Heart right ventricle (tissue), 16 donors: ENCODE measurements at regions of chr3 and their contacts with region 1.

Region 1: GRCh38 chr3:194134757-194135528 is 1.0 kb upstream of the HES1 start:
- DNase-seq: peak; percentile 93 to 96
- ATAC-seq: peak; percentile 61 to 83 (median 68)
- H3K4me3 ChIP-seq: peak overlapping the region; percentile 39 to 94 (median 69)
- H3K27ac ChIP-seq: peak overlapping the region; percentile 94 to 99 (median 96)
- H3K4me1 ChIP-seq: peaks cover 7 to 80% (median 60%) of the 10 kb centered on the region in 9 donors
- H3K27me3 ChIP-seq: peaks cover 0 to 94% (median 4%) of the 10 kb centered on the region in 7 donors
- CTCF ChIP-seq: peak in 1 of 9 donors; percentile 2

Region 2: DNA sequence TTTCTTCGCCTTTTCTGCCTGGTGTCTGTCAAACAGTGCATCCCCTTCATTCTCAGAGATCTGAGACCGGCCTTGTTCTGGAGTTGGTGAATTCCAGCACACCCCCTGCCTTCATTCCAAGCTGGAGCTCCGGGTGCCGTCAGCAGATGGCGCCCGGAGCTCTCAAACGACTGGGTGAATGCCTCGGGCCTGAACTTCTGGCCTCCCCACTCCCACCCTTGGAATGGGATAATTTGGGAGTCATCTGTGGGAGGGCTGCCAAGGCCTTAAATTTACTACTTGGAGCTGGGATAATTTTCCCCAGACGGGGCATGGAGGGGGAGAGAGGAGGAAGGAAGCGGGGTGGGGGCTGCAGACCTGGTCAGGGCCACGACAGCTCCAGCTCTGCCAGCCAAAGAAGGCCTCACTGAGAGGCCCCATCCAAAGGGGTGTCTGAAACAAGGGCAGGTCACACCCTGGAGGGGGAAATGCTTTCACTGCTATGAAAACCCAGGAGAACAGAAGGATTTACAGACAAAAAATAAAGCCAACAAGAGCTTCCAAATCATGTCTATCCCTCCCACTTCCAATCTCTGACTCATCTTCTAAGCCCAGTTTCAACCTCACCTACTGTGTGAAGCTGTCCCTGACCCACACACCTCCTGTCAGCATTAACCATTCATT is 354.0 kb before region 1 on chr3:
- intact Hi-C with region 1: loop called in 6 of 10 experiments (anchors 2 to 5 kb)
- DNase-seq: peak; percentile 72 to 75
- ATAC-seq: peak; percentile 85 to 95 (median 92)
- H3K4me3 ChIP-seq: no peak overlapping the region
- H3K27ac ChIP-seq: no peak overlapping the region
- H3K4me1 ChIP-seq: peaks cover 3 to 22% (median 8%) of the 10 kb centered on the region in 9 donors
- H3K27me3 ChIP-seq: peaks cover 4 to 81% (median 59%) of the 10 kb centered on the region in 7 donors
- CTCF ChIP-seq: peak; percentile 70 to 93 (median 80)

Region 3: GRCh38 chr3:193863657-193864357 is 271.1 kb before region 1 on chr3:
- intact Hi-C with region 1: loop called in 3 of 10 experiments (anchors 2 to 5 kb)
- DNase-seq: peak; percentile 40 to 45
- ATAC-seq: peak; percentile 46 to 94 (median 76)
- H3K4me3 ChIP-seq: no peak overlapping the region
- H3K27ac ChIP-seq: peak overlapping the region in 8 of 10 donors; percentile 32 to 67 (median 43)
- H3K4me1 ChIP-seq: peaks cover 0 to 41% (median 34%) of the 10 kb centered on the region in 9 donors
- H3K27me3 ChIP-seq: peaks cover 0 to 3% (median under 1%) of the 10 kb centered on the region in 7 donors
- CTCF ChIP-seq: no peak

Region 4: DNA sequence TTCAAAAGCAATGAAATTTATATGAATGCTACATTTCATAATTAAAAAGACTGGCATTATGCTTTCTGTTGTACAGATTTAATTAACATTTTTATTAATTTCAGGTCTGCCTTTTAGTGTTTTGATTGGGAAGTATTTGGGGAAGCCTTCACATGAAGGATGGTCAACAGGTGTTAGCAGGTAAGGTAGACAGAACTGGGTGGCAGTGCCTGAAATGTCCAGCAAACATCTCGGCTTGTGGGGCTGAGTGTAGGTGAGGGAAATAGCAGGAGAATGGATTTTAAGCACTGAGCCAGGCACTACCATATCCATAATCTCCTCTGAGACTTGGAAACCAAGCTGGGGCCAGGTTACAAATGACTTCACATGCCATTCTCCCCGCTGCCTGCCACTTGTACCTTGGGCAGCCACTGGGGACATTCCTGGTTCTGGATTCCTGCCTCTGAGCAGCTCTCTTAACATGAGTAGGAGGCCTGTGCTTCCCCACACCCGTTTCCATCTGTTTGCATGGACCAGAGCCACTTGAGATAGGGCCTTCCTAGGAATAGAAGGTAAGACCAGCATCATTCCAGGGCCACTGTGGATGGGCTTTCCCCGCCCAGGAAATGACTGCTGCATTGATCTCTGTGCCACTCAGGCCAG is 124.9 kb before region 1 on chr3:
- intact Hi-C with region 1: loop called in 2 of 10 experiments (anchors 5 to 10 kb)
- DNase-seq: peak in 1 of 2 donors; percentile 12
- ATAC-seq: peak in 6 of 8 donors; percentile 46 to 73 (median 52)
- H3K4me3 ChIP-seq: no peak overlapping the region
- H3K27ac ChIP-seq: no peak overlapping the region
- H3K4me1 ChIP-seq: peaks cover 0 to 17% (median 5%) of the 10 kb centered on the region in 9 donors
- H3K27me3 ChIP-seq: peaks cover 0 to 82% (median 26%) of the 10 kb centered on the region in 7 donors
- CTCF ChIP-seq: peak in 1 of 9 donors; percentile 6

Region 5: DNA sequence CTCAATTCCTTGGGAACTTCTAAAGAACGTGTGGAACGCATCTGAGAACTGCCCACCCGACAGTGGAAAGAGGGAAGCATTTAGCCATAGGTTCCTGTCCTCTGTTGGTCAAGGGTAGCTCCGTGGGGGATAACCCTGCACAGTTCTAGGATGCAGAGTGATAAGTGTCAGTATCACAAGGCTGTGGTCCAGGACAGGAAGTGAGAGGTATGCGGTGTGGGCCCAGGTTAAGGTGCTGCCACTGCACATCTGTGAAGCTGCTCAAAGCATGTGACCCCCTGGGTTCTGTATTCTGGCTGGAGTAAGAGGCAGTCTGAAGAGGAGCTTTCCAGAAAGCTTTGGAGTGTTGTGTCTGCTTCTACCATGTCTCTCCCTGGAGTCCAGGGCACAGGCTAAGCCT is 50.7 kb before region 1 on chr3:
- intact Hi-C with region 1: loop called in 2 of 10 experiments (anchors 5 to 10 kb)
- DNase-seq: no peak
- ATAC-seq: no peak
- H3K4me3 ChIP-seq: no peak overlapping the region
- H3K27ac ChIP-seq: no peak overlapping the region
- H3K4me1 ChIP-seq: peaks cover 9 to 29% (median 18%) of the 10 kb centered on the region in 9 donors
- H3K27me3 ChIP-seq: peaks cover 0 to 12% (median 0%) of the 10 kb centered on the region in 7 donors
- CTCF ChIP-seq: no peak

Region 6: DNA sequence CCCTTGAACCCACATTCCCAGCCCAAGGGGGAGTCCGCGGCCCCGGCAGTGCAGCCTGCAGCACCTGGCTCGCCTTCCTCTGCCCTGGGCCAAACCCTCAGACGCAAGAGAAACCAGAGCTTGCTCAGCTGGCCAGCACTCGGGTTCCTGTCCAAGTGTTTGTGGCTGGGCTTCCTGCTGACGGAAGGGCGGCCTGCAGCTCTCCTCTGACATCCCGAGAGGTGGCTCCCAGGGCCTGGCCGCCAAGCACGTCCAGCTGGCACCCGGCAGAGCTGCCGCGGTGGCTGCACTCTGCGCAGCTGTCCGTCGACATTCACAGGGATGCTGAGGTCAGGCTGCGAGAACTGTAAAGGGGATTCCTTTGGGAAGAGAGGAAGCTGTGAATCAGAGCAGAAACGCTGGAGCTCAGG is 130.5 kb after region 1 on chr3:
- intact Hi-C with region 1: loop called in 8 of 10 experiments (anchors 2 to 5 kb)
- DNase-seq: peak; percentile 92 to 94
- ATAC-seq: peak; percentile 78 to 88 (median 80)
- H3K4me3 ChIP-seq: peak overlapping the region in 2 of 10 donors; percentile 12 to 20
- H3K27ac ChIP-seq: peak overlapping the region in 9 of 10 donors; percentile 70 to 93 (median 85)
- H3K4me1 ChIP-seq: peaks cover 32 to 68% (median 60%) of the 10 kb centered on the region in 9 donors
- H3K27me3 ChIP-seq: no peaks in the 10 kb centered on the region
- CTCF ChIP-seq: no peak